ENCODE measurements at regions of chrX and their contacts with region 1.

Region 1: DNA sequence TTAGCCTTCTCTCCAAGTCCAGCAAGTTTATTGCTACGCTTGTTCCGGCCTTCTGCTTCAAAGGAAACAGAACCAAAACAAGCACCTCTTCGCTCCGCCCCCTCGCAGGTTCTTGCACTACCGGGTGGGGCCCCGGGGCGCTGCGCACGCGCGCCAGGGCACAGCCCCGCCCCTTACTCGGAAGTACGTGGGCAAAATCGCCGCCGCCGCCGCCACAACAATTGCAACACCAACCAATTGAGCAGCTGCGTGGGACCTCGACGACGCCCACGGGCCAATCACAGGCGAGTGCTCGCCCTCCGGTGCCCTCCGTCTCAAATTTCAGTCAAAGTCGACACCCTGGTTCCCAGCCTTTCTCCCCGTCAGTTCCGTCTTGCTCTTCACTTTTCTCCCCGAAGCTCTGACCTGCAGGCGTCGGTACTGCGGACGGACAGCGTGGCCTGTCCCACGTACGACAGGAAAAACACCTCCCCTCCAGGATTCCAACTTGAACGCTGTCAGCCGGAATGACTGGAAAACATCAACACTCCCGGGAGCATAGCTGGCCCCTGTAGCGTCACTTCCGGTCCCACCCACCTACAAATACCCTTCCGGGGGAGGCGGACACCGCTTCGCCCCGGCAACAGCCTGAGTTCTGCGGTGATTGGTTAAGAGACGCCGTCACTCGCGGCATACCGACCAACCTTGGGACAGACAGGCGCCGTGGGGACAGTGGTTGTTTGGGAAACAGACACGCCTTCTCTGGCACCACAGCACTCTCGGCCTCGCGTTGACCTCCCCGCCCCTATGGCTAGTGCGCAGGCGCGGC is 624 bp upstream of the OTUD5 start:
- DNase-seq: peak in 1 of 2 donors; percentile 98
- H3K4me3 ChIP-seq: peak overlapping the region; percentile 61 to 64
- H3K27ac ChIP-seq: peak overlapping the region; percentile 90
- H3K4me1 ChIP-seq: peaks cover 31% of the 10 kb centered on the region
- H3K27me3 ChIP-seq: no peaks in the 10 kb centered on the region
- CTCF ChIP-seq: no peak
- POLR2A ChIP-seq: peak in 1 of 2 donors; percentile 17

Region 2: GRCh38 chrX:48937054-48937907 is 20.8 kb before region 1 on chrX:
- intact Hi-C with region 1: no loop called
- DNase-seq: no peak
- H3K4me3 ChIP-seq: no peak overlapping the region
- H3K27ac ChIP-seq: no peak overlapping the region
- H3K4me1 ChIP-seq: peaks cover 21% of the 10 kb centered on the region
- H3K27me3 ChIP-seq: no peaks in the 10 kb centered on the region
- CTCF ChIP-seq: no peak
- POLR2A ChIP-seq: no peak

Region 3: DNA sequence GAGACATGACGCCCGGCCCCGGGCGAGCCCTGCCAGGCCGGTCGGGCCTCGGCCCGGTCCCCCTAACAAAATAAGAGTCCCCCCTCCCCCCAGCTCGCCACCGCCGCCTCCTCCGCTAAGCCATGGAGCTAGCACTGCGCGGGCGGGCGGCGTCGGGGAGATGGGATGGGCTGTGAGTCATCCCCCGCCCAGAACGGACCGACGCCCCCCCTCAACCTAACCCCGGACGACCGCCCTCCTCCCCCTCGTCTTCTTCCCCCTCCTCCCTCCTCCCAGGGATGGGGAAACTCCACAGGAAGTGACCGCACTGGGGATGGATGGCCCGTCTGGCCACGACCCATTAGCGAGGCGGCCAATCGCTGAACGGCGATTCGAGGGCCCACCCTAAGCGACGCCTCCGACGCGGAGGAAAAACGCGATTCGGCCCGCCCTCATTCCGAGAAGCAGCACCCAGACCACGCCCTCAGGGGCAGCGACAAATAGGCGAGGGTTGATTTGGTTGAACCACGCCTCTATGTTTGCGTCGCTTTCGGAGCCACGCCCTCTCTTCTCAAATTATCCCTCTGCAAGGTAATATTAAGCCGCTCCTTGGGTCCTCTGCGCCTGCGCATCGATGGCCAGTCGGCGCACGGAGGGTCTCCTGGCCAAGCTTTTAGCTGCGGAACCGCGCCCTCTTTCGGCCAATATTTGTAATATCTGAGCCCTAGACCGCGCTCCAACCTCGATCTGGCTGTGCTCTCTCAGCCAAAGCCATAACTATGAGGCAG is 85.4 kb after region 1 on chrX and contains the start of gene TFE3:
- intact Hi-C with region 1: loop called (anchors 5 kb)
- DNase-seq: peak in 1 of 2 donors; percentile 99
- H3K4me3 ChIP-seq: peak within 1 kb of the TSS; percentile 59 to 83
- H3K27ac ChIP-seq: peak within 1 kb of the TSS; percentile 95
- H3K4me1 ChIP-seq: peaks cover 20% of the 10 kb centered on the region
- H3K27me3 ChIP-seq: no peaks in the 10 kb centered on the region
- CTCF ChIP-seq: peak; percentile 16 to 54 (median 26)
- POLR2A ChIP-seq: peak in 1 of 2 donors; percentile 87
- total RNA-seq, gene TFE3: 87.4 TPM